Activated CD4-positive, alpha-beta T cell treated with anti-CD3 and anti-CD28 coated beads for 36 hours (primary cell): ENCODE measurements at regions of chr13 and their contacts with region 1.

Region 1: DNA sequence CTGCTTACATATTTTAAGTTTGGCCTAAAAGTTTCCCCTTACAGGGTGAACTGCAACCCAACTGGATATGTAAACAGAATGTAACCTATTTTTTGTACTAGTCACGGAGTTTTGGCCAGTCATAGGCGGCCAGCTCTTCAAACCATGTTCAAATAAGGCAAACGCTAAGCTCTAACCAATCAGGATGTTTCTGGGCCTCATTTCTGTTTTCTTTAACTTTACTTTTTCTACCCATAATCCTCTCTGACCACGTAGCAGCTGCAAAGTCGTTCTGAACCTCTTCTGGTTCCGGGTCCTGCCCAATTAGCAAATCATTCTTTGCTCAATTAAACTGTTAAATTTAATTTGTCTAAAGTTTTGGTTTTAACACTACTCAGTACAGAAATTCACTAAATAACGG is 8.2 kb upstream of the ZMYM2 start:
- DNase-seq: no peak
- ATAC-seq: no peak
- H3K4me3 Mint-ChIP-seq: no peak overlapping the region
- H3K27ac Mint-ChIP-seq: no peak overlapping the region
- H3K4me1 Mint-ChIP-seq: no peaks in the 10 kb centered on the region
- H3K27me3 Mint-ChIP-seq: peaks cover 5% of the 10 kb centered on the region

Region 2: GRCh38 chr13:19940106-19940505 is 10.3 kb before region 1 on chr13:
- CTCF ChIA-PET with region 1: interaction called, 11 read pairs
- POLR2A ChIA-PET with region 1: no interaction called
- intact Hi-C with region 1: no loop called
- DNase-seq: no peak
- ATAC-seq: no peak
- H3K4me3 Mint-ChIP-seq: no peak overlapping the region
- H3K27ac Mint-ChIP-seq: no peak overlapping the region
- H3K4me1 Mint-ChIP-seq: no peaks in the 10 kb centered on the region
- H3K27me3 Mint-ChIP-seq: peaks cover 5% of the 10 kb centered on the region

Region 3: DNA sequence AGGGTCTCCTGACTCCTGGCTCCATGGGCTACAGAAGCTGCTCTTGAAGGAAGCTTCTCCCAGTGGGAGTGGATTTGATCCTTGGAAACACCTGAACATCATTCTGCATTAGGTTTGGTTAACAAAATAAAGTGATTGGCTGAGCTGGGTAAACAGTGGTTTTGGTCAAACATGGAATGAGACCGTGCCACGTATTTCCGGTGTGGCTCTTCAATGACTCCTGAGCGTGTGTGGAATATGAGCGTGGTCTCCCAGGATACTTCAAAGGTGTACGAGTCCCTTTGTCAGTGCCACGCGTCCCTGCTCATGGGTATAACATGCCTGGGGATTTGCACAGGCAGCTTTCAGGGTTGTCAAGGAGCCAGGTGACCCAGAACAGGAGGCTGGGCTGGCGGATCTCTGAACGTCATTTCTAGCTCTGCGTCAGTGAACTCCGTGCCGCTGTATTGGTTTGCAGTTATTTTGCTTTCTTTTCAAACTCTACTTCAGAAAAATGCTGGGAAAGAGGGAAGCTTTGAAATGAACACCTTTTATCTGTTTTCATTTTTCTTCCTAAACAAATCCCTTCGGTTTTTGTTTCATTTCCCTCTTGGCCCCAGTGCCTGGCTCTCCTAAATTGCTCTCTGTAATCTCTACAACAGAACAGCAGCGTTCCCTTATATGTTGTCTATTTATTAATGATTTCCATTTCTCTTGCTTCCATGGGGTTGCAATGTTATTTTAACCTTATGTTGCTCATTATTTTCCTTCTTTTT is 308.0 kb after region 1 on chr13:
- CTCF ChIA-PET with region 1: no interaction called
- POLR2A ChIA-PET with region 1: no interaction called
- intact Hi-C with region 1: no loop called
- DNase-seq: no peak
- ATAC-seq: no peak
- H3K4me3 Mint-ChIP-seq: no peak overlapping the region
- H3K27ac Mint-ChIP-seq: no peak overlapping the region
- H3K4me1 Mint-ChIP-seq: no peaks in the 10 kb centered on the region
- H3K27me3 Mint-ChIP-seq: peaks cover 4% of the 10 kb centered on the region